Activated CD8-positive, alpha-beta memory T cell treated with anti-CD3 and anti-CD28 coated beads, Interleukin-2, amount 10 ng/mL, durations not matched to agents 7 days and 5 days (primary cell): ENCODE measurements at regions of chr3 and their contacts with region 1.

Region 1: DNA sequence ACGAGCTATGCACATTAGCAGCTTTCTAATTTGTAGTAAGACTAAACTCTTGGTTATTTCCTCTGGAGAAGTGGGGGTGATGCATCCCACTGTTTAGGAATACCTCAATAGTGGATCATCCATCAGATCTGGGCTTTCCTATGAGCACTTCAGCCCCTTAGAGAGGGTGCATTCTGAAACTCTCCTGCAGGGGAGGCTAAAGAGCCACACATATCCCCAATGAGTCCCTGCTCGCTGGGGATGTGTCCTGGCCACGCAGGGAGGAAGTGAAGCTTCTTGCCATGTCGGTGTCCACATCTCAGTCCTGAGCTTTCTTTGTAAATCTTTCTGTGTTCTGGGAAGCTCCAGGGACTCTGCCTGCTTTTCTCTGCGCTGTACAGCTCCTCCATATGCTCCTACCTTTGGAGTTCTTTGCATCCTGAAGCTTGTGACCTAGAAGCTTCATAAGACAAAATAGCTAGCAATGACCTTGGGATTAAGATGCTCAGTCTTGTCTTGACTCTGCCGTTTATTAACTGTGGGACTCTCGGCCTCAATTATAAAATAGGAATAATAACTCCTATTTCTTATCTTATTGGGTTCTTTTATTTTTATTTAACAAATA is 28.3 kb upstream of the MASP1 start:
- DNase-seq: peak; percentile 79
- ATAC-seq: peak; percentile 83
- H3K4me3 Mint-ChIP-seq: no peak overlapping the region
- H3K27ac Mint-ChIP-seq: no peak overlapping the region
- H3K4me1 Mint-ChIP-seq: peaks cover 19% of the 10 kb centered on the region
- H3K27me3 Mint-ChIP-seq: peaks cover 32% of the 10 kb centered on the region

Region 2: GRCh38 chr3:187164885-187165543 is 154.8 kb before region 1 on chr3:
- CTCF ChIA-PET with region 1: no interaction called
- DNase-seq: peak; percentile 46
- ATAC-seq: peak; percentile 70
- H3K4me3 Mint-ChIP-seq: no peak overlapping the region
- H3K27ac Mint-ChIP-seq: no peak overlapping the region
- H3K4me1 Mint-ChIP-seq: peaks cover 3% of the 10 kb centered on the region
- H3K27me3 Mint-ChIP-seq: peaks cover 40% of the 10 kb centered on the region

Region 3: DNA sequence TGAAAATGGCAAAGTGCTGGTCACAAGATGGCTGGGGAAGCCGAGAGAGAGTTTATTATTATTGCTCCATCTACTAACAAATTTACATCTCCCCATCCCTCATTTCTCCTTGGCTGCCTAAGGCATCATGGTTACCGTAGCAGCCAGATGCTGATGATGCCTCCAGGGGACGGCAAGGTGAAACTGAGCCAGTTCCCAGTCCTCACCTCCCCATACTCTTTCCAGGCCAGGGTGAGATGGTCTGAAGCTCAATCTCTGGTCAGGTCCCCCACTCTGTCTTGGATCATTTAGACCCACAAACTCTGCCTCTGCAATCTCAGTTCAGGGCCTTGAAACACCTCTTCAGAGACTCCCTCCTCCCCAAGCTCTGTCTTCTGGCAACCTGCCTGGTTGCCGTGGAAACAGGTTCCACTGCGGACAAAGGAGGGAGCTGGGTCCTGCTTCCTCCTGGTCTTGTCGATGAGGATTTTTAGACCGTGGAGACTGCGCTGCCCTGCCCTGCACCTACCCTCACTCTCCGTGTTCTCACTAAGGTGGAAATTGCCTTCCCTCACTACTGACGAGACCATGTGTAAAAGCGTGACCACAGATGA is 122.6 kb before region 1 on chr3 and contains the start of gene RTP1:
- CTCF ChIA-PET with region 1: no interaction called
- DNase-seq: no peak
- ATAC-seq: no peak
- H3K4me3 Mint-ChIP-seq: no peak within 1 kb of the TSS
- H3K27ac Mint-ChIP-seq: no peak within 1 kb of the TSS
- H3K4me1 Mint-ChIP-seq: peaks cover 10% of the 10 kb centered on the region
- H3K27me3 Mint-ChIP-seq: peaks cover 35% of the 10 kb centered on the region
- total RNA-seq, gene RTP1: not detected

Region 4: DNA sequence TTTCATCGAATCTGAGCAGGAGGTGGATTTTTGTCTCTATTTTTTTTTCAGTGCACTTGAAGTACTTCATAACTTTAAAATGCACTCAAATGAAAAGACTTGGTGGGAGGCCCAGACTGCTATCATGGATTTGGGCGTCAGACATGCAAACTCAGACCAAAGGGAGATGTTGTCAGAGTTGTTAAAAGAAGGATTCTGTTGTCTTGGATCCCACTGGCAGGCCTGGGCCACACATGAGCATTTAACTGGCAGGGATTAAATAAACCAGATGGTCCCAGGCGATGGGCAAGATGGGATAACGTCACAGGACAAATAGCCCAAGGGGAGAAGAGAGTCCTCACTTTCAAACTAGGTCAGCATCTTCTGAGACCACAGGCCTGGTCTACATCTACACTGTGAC is 107.1 kb before region 1 on chr3:
- CTCF ChIA-PET with region 1: interaction called, 10 read pairs
- DNase-seq: no peak
- ATAC-seq: no peak
- H3K4me3 Mint-ChIP-seq: no peak overlapping the region
- H3K27ac Mint-ChIP-seq: no peak overlapping the region
- H3K4me1 Mint-ChIP-seq: no peaks in the 10 kb centered on the region
- H3K27me3 Mint-ChIP-seq: peaks cover 17% of the 10 kb centered on the region

Region 5: DNA sequence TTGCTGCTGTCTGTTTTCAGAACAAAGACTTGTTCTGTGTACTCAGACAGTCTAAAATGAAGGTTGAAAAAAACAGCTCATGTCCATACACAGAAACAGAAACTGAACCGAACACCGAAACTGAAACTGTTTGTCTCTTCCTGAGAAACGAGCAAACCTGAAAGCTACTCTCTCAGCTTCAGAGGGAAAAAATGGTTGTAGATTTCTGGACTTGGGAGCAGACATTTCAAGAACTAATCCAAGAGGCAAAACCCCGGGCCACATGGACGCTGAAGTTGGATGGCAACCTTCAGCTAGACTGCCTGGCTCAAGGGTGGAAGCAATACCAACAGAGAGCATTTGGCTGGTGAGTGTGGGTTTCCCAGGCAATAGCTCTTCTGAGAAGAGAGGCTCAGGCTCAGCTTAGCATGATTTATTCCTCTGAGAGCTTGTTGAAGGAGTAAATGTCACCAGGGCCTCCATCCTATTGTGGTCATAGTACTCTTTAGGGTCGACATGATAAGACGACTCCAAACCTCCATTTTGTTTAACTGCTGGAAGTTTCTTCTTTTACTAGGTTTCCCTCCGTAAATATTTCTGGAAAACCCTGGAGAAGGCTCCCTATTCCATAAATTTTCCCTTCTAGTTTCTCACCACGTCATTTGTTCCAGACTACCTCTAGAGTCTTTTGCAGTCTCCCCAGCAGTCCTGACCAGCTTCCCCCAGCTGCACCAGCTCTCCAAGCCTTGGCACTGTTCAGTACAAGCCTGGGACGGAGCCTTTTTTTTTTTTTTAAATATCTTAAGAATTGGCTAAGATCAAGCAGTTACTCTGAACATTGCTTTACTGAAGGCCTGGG is 48.7 kb after region 1 on chr3 and contains the start of gene RTP4:
- CTCF ChIA-PET with region 1: interaction called, 27 read pairs
- DNase-seq: peak; percentile 61
- ATAC-seq: peak; percentile 95
- H3K4me3 Mint-ChIP-seq: peak within 1 kb of the TSS; percentile 90
- H3K27ac Mint-ChIP-seq: peak within 1 kb of the TSS; percentile 98
- H3K4me1 Mint-ChIP-seq: peaks cover 29% of the 10 kb centered on the region
- H3K27me3 Mint-ChIP-seq: no peaks in the 10 kb centered on the region
- total RNA-seq, gene RTP4: 16.9 to 24.3 TPM

Region 6: GRCh38 chr3:187616307-187616972 is 296.6 kb after region 1 on chr3:
- CTCF ChIA-PET with region 1: interaction called, 49 read pairs
- DNase-seq: peak; percentile 72
- ATAC-seq: peak; percentile 82
- H3K4me3 Mint-ChIP-seq: no peak overlapping the region
- H3K27ac Mint-ChIP-seq: no peak overlapping the region
- H3K4me1 Mint-ChIP-seq: peaks cover 5% of the 10 kb centered on the region
- H3K27me3 Mint-ChIP-seq: peaks cover 16% of the 10 kb centered on the region

Region 7: DNA sequence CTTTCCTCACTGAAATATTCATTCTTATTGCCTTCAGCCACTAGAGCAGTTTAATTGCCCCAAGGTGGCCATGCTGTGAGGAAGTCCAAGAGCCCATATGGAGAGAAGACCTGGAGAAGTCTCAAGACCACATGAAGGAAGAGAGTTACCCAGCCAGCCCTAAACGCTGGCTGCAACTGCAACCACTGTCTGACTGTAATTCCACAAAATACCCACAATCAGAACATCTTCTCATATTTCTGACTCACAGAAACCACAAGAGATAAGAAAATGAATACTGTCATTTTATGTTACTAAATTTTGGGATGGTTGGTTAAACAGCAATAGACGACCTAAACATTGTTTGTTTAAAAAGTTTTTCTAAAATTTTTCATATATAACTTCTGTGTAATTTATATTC is 365.1 kb after region 1 on chr3:
- CTCF ChIA-PET with region 1: interaction called, 370 read pairs
- DNase-seq: no peak
- ATAC-seq: no peak
- H3K4me3 Mint-ChIP-seq: no peak overlapping the region
- H3K27ac Mint-ChIP-seq: no peak overlapping the region
- H3K4me1 Mint-ChIP-seq: peaks cover 8% of the 10 kb centered on the region
- H3K27me3 Mint-ChIP-seq: peaks cover 67% of the 10 kb centered on the region

Region 8: DNA sequence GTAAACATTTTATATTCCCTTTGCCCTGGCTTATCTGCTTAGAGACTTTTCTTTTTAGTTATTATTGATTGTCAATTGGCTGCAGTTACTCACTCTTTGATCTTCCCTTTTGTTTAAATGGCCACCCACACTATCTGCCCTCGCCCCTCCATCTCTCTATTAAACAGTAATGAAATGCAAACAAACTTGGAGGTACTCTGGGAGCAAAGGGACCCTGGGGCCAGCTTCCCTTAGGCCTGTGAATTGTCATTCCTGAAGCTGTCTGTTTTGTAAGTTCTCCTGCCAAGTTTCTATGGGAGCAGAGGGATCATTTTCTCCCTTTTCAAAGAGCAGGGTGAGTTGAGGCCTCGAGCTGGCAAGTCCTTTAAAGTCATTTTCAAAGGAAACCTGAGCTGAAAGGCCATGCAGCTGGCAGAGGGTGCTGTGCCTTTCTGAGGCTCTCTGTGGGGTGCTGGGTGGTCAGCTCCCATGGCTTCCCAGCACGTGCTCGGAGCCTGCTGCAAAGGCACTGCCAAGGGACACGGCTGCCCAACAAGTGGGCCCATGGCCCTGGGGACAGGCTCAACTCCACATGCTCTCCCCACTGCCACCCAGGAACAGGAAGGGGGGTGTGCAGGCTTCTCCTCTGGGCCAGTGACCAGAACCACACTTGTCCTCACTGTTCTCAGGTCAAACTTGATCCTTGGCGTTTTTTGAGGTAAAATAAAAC is 400.0 kb after region 1 on chr3:
- CTCF ChIA-PET with region 1: interaction called, 69 read pairs
- DNase-seq: no peak
- ATAC-seq: no peak
- H3K4me3 Mint-ChIP-seq: no peak overlapping the region
- H3K27ac Mint-ChIP-seq: no peak overlapping the region
- H3K4me1 Mint-ChIP-seq: no peaks in the 10 kb centered on the region
- H3K27me3 Mint-ChIP-seq: peaks cover 2% of the 10 kb centered on the region